Common myeloid progenitor, CD34-positive (primary cell): ENCODE measurements at regions of chr17 and their contacts with region 1.

Region 1: DNA sequence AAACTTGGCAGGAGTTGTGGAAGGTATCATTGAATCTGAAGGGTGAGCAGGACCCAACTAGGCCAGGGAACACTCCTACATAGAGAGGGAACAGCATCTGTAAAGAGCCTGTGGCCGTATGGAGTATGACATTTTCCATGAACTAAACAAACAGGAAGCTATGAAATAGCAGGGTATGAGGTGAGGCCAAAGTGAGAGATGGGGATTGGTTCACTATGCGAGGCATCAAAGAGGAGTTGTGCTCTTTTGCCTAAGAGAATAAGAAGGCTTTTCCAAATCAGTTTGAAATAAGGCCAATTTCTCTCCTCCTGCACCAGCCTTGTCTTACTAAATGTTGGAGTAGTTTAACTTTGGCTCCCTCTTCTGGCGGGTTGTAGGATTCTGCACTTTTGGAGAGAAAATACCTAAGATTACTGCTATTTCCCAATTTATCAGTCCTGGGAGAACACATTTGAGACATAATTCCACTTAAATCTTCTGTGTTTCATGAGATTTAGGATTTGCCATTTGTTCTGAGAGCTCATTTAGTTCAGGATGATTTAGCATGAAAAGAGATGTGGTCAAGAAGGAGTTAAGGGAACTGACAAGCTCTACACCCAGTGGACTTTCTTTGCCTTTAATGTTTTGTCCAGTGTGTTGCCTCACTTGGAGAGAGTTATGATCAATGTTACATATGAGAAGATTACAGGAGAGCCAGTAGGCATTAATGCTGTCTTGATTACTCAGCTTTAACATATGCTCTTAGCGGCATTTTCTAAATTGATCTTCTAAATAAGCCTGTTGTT is 55.4 kb downstream of the TNRC6C start:
- DNase-seq: peak; percentile 66 to 73 (median 66)
- H3K4me3 ChIP-seq: no peak overlapping the region
- H3K27ac ChIP-seq: no peak overlapping the region
- H3K4me1 ChIP-seq: peaks cover 0 to 6% (median 2%) of the 10 kb centered on the region in 4 experiments
- H3K27me3 ChIP-seq: no peaks in the 10 kb centered on the region

Region 2: GRCh38 chr17:77542551-77543490 is 471.1 kb before region 1 on chr17:
- CTCF ChIA-PET with region 1: interaction called, 20 read pairs
- POLR2A ChIA-PET with region 1: interaction called, 3 read pairs
- DNase-seq: peak; percentile 74 to 83 (median 79)
- H3K4me3 ChIP-seq: no peak overlapping the region
- H3K27ac ChIP-seq: no peak overlapping the region
- H3K4me1 ChIP-seq: peaks cover 0 to 34% (median 17%) of the 10 kb centered on the region in 4 experiments
- H3K27me3 ChIP-seq: no peaks in the 10 kb centered on the region

Region 3: DNA sequence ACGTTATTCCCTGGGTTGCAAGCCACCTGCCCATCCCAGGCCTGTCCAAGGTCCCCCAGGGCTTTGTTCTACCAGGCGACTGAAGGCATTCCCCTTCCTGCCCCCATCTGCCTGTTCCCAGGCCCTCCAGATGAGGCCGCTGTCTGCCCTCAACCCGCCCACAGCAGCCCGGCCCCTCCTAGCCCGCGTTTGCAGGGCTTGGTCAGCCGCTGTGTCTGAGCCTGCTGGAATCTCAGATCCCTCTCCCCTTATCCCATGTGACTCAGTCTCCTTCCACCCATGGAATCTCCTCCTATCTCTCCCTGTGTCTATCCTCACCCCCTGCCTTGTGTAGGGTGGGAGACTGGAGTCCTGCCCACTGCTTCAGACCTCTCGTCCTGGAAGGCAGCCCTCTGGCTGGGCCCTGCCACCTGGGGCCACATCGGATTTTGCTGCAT is 241.4 kb before region 1 on chr17:
- CTCF ChIA-PET with region 1: interaction called, 40 read pairs
- POLR2A ChIA-PET with region 1: no interaction called
- DNase-seq: peak; percentile 48 to 63 (median 61)
- H3K4me3 ChIP-seq: no peak overlapping the region
- H3K27ac ChIP-seq: no peak overlapping the region
- H3K4me1 ChIP-seq: peaks cover 0 to 3% (median 0%) of the 10 kb centered on the region in 4 experiments
- H3K27me3 ChIP-seq: peaks cover 0 to 5% (median 0%) of the 10 kb centered on the region in 5 experiments

Region 4: DNA sequence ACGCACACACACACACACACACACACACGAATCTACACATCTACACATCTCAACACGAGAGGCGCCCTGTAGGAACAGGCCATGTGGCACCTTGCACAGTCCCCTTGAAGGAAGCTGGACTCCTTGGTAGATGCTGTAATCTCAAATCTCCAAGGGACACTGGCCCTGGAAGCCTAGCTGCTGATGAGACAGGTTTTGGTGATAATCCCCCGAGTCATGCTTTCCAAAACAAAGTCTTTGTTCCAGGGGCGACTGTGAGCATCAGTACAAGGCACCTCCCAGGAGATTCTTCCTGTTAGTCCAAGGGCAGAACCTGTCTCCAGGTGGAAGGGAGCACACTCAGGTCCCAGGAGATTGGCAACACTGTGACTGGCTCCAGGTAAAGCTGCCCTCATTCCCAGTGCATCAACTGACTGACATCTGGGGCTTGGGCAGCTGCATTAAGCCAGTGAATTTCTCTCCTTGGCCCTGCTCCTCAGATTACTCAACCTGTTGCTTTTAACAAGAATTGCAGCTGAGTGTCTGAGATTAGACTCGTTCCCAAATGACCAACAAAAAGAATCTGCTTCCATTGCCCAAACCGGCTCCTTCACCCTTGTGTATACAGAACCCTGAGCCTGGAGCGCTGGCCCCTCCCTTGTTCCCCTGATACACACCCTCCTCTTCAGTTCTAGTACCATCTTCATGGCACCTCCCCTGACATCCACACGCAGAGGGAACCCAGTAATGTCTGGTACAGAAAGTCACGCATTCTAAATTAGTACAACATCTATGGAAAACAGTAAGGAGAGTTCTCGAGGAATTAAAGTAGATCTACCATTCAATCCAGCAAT is 69.3 kb before region 1 on chr17:
- CTCF ChIA-PET with region 1: no interaction called
- POLR2A ChIA-PET with region 1: no interaction called
- DNase-seq: no peak
- H3K4me3 ChIP-seq: no peak overlapping the region
- H3K27ac ChIP-seq: no peak overlapping the region
- H3K4me1 ChIP-seq: no peaks in the 10 kb centered on the region
- H3K27me3 ChIP-seq: peaks cover 0 to 3% (median 0%) of the 10 kb centered on the region in 5 experiments

Region 5: GRCh38 chr17:77957857-77958715 is 55.8 kb before region 1 on chr17 and contains the start of gene TNRC6C:
- CTCF ChIA-PET with region 1: interaction called, 12 read pairs
- POLR2A ChIA-PET with region 1: interaction called, 11 read pairs
- DNase-seq: peak; percentile 99 to 100 (median 99)
- H3K4me3 ChIP-seq: peak within 1 kb of the TSS; percentile 70 to 96 (median 78)
- H3K27ac ChIP-seq: peak within 1 kb of the TSS in 1 of 2 experiments; percentile 8
- H3K4me1 ChIP-seq: peaks cover 17 to 26% (median 22%) of the 10 kb centered on the region in 4 experiments
- H3K27me3 ChIP-seq: peaks cover 4 to 23% (median 19%) of the 10 kb centered on the region in 5 experiments

Region 6: DNA sequence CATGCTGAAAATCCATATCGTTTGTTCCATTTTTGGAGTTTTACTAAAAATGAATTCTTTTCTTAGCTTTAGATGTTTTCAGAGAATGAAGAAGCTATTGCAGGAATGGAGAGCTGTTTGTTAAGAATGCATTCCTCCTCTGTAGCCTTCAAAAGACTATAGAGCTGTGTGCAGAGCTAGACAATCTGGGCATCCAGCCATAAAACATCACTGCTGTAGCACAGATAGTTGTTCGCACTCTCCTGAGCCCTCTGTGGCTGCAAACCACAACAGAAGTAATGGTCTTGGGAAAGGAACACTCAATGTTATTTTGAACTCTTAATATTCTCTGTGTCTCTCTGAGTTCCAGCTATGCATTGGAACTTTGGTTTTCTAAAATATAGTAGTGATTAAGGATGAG is 50.4 kb before region 1 on chr17:
- CTCF ChIA-PET with region 1: interaction called, 12 read pairs
- POLR2A ChIA-PET with region 1: interaction called, 11 read pairs
- DNase-seq: peak; percentile 74 to 94 (median 94)
- H3K4me3 ChIP-seq: no peak overlapping the region
- H3K27ac ChIP-seq: no peak overlapping the region
- H3K4me1 ChIP-seq: peaks cover 17 to 25% (median 22%) of the 10 kb centered on the region in 4 experiments
- H3K27me3 ChIP-seq: peaks cover 0 to 13% (median 11%) of the 10 kb centered on the region in 5 experiments

Region 7: DNA sequence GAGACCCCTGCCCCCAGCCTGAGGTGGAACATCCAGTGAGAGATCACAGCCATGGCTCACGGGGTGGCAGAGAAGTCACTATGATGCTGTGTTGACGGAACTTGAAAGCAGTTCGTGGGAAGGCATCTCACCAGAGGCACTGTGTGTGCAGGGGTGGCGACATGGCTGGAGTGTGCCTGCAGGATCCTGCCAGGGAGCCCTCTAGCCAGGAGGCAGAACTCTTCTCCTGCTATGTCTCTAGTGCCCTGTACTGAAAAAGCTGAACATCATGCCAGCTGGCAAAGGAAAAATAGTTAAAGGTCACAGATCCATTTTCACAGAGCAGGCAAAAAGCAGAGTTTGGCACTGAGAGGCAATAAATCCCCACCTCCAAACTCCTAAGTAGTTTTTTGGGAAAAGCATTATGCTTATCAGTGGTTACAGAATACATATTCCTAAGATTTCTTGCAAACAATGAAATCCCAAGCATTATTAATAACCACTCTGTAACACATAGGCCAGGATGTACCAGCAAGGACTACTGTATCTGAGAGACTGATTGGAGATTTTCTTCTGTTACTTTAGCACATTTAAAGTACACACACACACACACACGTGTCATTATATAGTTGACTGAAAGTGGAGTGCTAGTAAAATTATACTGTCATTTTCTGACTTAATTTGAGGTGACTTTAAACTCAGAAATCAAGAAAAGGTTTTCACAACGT is 18.6 kb before region 1 on chr17:
- CTCF ChIA-PET with region 1: interaction called, 12 read pairs
- POLR2A ChIA-PET with region 1: no interaction called
- DNase-seq: no peak
- H3K4me3 ChIP-seq: no peak overlapping the region
- H3K27ac ChIP-seq: no peak overlapping the region
- H3K4me1 ChIP-seq: peaks cover 0 to 12% (median 8%) of the 10 kb centered on the region in 4 experiments
- H3K27me3 ChIP-seq: no peaks in the 10 kb centered on the region

Region 8: GRCh38 chr17:78081551-78081950 is 67.7 kb after region 1 on chr17:
- CTCF ChIA-PET with region 1: no interaction called
- POLR2A ChIA-PET with region 1: no interaction called
- DNase-seq: no peak
- H3K4me3 ChIP-seq: no peak overlapping the region
- H3K27ac ChIP-seq: peak overlapping the region in 1 of 2 experiments; percentile 25
- H3K4me1 ChIP-seq: no peaks in the 10 kb centered on the region
- H3K27me3 ChIP-seq: no peaks in the 10 kb centered on the region